CD14-positive monocyte (primary cell): ENCODE measurements at regions of chr5 and their contacts with region 1.

Region 1: GRCh38 chr5:65481635-65482295 is at the start of gene ADAMTS6:
- DNase-seq: peak; percentile 19 to 60 (median 33)
- H3K4me3 ChIP-seq: peak within 1 kb of the TSS; percentile 65 to 99 (median 90)
- H3K4me3 Mint-ChIP-seq: peak within 1 kb of the TSS in 1 of 2 donors; percentile 95
- H3K27ac ChIP-seq: peak within 1 kb of the TSS in 1 of 2 donors; percentile 67
- H3K27ac Mint-ChIP-seq: peak within 1 kb of the TSS in 6 of 7 donors; percentile 38 to 85 (median 64)
- H3K4me1 ChIP-seq: peaks cover 20 to 29% of the 10 kb centered on the region in 2 donors
- H3K4me1 Mint-ChIP-seq: peaks cover 7% of the 10 kb centered on the region
- H3K27me3 ChIP-seq: peaks cover 0 to 3% of the 10 kb centered on the region in 2 donors
- H3K27me3 Mint-ChIP-seq: peaks cover 2 to 9% (median 8%) of the 10 kb centered on the region in 3 donors
- CTCF ChIP-seq: no peak
- polyA plus RNA-seq, gene ADAMTS6: 0.01 TPM in 1 of 3 donors, not detected in the others

Region 2: GRCh38 chr5:64811050-64811640 is 670.6 kb before region 1 on chr5:
- intact Hi-C with region 1: loop called (anchors 5 to 10 kb)
- DNase-seq: peak; percentile 10 to 28 (median 27)
- H3K4me3 ChIP-seq: no peak overlapping the region
- H3K4me3 Mint-ChIP-seq: no peak overlapping the region
- H3K27ac ChIP-seq: no peak overlapping the region
- H3K27ac Mint-ChIP-seq: no peak overlapping the region
- H3K4me1 ChIP-seq: no peaks in the 10 kb centered on the region
- H3K4me1 Mint-ChIP-seq: no peaks in the 10 kb centered on the region
- H3K27me3 ChIP-seq: no peaks in the 10 kb centered on the region
- H3K27me3 Mint-ChIP-seq: no peaks in the 10 kb centered on the region
- CTCF ChIP-seq: peak; percentile 64

Region 3: DNA sequence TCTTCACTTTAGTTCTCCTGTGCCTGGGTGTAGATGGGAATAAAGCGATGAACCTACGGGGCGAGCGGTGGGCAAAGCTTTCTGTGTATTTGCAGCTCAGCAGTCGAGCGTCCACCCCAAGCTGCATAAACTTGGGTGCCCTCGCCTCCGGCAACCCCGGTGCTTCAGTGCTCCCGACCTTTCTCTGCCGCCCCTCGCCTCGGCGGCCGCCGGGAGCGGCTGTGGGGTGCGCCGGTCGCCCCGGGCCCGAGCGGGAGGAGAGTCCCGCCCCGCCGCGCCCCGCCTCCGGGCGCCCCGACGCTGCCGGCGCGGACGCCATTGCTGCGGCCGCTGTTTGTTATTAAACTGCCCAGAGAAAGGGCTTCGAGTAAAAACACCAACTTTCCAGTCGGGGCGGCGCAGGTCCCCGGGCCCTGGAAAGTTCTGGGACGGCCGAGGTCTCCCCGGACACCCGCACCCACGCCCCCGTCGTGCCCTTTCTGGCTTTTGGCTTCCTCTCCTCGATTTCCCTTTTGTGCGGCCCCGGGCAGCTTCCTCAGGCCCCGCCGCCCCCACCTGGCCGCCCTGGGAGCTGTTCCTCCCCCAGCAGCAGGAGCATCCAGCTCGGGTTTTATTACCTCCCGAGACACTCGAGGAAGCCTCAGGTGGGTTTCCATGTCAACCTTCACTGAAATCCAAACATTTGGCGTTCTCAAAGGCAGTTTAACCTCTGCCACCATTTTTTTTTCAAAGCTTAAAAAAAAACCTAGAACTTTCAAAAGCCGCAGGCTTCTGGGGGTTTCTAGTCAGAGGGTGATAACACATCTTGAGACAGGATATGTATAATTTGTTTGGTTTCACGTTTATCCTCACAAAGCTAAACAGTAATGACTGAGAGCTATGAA is 378.7 kb before region 1 on chr5:
- intact Hi-C with region 1: loop called in 1 of 2 experiments (anchors 10 kb)
- DNase-seq: peak in 2 of 3 donors; percentile 7 to 33
- H3K4me3 ChIP-seq: peak overlapping the region; percentile 54 to 83 (median 79)
- H3K4me3 Mint-ChIP-seq: peak overlapping the region; percentile 87 to 98
- H3K27ac ChIP-seq: peak overlapping the region in 1 of 2 donors; percentile 38
- H3K27ac Mint-ChIP-seq: peak overlapping the region in 4 of 7 donors; percentile 9 to 78 (median 50)
- H3K4me1 ChIP-seq: peaks cover 4 to 9% of the 10 kb centered on the region in 2 donors
- H3K4me1 Mint-ChIP-seq: peaks cover 10% of the 10 kb centered on the region
- H3K27me3 ChIP-seq: peaks cover 0 to 5% of the 10 kb centered on the region in 2 donors
- H3K27me3 Mint-ChIP-seq: peaks cover 10 to 28% (median 14%) of the 10 kb centered on the region in 3 donors
- CTCF ChIP-seq: peak; percentile 22

Region 4: GRCh38 chr5:65451436-65451835 is 30.3 kb before region 1 on chr5:
- intact Hi-C with region 1: no loop called
- DNase-seq: no peak
- H3K4me3 ChIP-seq: no peak overlapping the region
- H3K4me3 Mint-ChIP-seq: no peak overlapping the region
- H3K27ac ChIP-seq: no peak overlapping the region
- H3K27ac Mint-ChIP-seq: no peak overlapping the region
- H3K4me1 ChIP-seq: no peaks in the 10 kb centered on the region
- H3K4me1 Mint-ChIP-seq: no peaks in the 10 kb centered on the region
- H3K27me3 ChIP-seq: no peaks in the 10 kb centered on the region
- H3K27me3 Mint-ChIP-seq: no peaks in the 10 kb centered on the region
- CTCF ChIP-seq: no peak